IMR-90 (cell line): ENCODE measurements at regions of chr12 and their contacts with region 1.

Region 1: DNA sequence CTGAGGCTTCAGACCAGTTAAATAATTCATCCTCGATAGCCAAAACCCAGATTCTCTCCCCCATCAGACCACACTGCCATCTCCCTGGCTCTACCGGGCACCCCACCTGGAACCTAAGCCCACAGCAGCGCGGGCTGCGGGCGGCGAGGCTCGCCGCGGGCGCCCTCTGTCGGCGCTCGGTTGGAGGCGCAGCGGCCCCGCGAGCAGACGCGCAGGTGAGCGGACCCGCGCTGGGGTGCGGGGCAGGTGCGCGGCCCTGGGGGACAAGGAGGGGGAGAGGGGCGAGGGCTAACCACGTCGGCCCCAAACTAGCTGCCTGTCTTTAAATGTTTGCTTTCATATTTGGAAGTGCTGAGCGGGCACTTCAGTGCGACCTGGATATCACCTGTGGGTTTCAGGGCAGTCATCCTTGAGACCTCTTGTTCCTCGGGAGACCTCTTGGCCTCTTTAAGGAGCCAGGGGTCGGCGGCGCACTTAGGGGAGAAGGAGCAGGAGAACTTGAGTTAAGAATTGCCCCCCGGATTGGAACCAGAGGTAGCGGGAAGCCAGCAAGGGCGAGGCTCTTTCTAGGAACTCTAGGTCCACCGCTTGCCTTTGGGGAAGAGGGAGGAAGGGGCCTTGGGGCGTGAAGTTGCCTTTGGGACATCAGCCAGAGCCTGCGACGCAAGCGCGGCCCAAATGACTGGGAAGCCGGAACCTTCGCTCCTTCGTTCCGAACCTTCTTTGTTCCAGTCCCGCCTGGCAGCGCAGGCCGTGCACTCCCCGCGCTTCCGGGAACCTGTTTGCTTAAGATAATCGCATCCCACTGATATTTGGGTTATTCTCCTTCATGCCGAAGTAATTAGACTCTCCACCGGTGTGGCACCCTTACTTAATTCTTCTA is 78.7 kb downstream of the NEDD1 start:
- DNase-seq: no peak
- ATAC-seq: peak; percentile 75
- H3K4me3 ChIP-seq: peak overlapping the region; percentile 10
- H3K27ac ChIP-seq: no peak overlapping the region
- H3K4me1 ChIP-seq: no peaks in the 10 kb centered on the region
- H3K27me3 ChIP-seq: peaks cover 10% of the 10 kb centered on the region
- CTCF ChIP-seq: peak; percentile 64
- POLR2A ChIP-seq: no peak
- RAD21 ChIP-seq: peak; percentile 63

Region 2: GRCh38 chr12:96578526-96579125 is 407.1 kb before region 1 on chr12:
- CTCF ChIA-PET with region 1: interaction called, 7 read pairs
- POLR2A ChIA-PET with region 1: no interaction called
- dilution Hi-C with region 1: no loop called
- in situ Hi-C with region 1: loop called (anchors 10 kb)
- intact Hi-C with region 1: loop called (anchors 1 kb)
- DNase-seq: peak; percentile 64
- ATAC-seq: peak; percentile 88
- H3K4me3 ChIP-seq: no peak overlapping the region
- H3K27ac ChIP-seq: no peak overlapping the region
- H3K4me1 ChIP-seq: no peaks in the 10 kb centered on the region
- H3K27me3 ChIP-seq: no peaks in the 10 kb centered on the region
- CTCF ChIP-seq: peak; percentile 80
- POLR2A ChIP-seq: no peak
- RAD21 ChIP-seq: peak; percentile 85

Region 3: GRCh38 chr12:96587691-96588090 is 398.0 kb before region 1 on chr12:
- CTCF ChIA-PET with region 1: no interaction called
- POLR2A ChIA-PET with region 1: no interaction called
- dilution Hi-C with region 1: no loop called
- in situ Hi-C with region 1: loop called (anchors 10 kb)
- intact Hi-C with region 1: no loop called
- DNase-seq: peak; percentile 22
- ATAC-seq: no peak
- H3K4me3 ChIP-seq: no peak overlapping the region
- H3K27ac ChIP-seq: no peak overlapping the region
- H3K4me1 ChIP-seq: no peaks in the 10 kb centered on the region
- H3K27me3 ChIP-seq: no peaks in the 10 kb centered on the region
- CTCF ChIP-seq: no peak
- POLR2A ChIP-seq: no peak
- RAD21 ChIP-seq: no peak

Region 4: DNA sequence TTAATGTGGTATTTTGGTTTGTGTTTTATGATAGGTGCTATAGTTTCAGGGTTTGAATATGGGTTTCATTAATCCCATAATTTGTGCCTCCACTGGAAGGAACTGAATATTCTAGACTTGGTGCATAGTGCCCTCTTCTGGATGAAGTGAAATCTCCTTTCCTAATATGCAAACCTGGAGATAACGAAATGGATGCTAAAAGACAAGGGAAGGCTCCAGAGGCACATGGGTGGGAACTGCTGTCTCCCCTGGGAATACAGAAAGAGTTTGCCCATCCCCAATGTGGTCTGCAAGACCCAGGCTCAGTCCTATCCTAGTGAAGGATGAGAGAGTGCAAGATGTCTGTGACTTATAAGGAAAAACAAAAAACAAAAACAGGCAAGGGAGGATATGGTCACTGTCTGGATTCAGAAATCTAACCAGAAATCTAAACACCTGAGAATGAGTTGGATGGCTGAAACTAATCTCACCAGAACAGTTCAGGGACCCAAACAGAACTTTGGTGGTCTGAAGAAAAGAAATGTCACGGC is 1387.4 kb after region 1 on chr12:
- CTCF ChIA-PET with region 1: no interaction called
- POLR2A ChIA-PET with region 1: no interaction called
- dilution Hi-C with region 1: no loop called
- in situ Hi-C with region 1: loop called (anchors 25 kb)
- intact Hi-C with region 1: loop called (anchors 1 kb)
- DNase-seq: peak; percentile 51
- ATAC-seq: peak; percentile 64; the same call in 1 of the 2 replicates
- H3K4me3 ChIP-seq: no peak overlapping the region
- H3K27ac ChIP-seq: no peak overlapping the region
- H3K4me1 ChIP-seq: no peaks in the 10 kb centered on the region
- H3K27me3 ChIP-seq: peaks cover 4% of the 10 kb centered on the region
- CTCF ChIP-seq: peak; percentile 75
- POLR2A ChIP-seq: no peak
- RAD21 ChIP-seq: peak; percentile 84

Region 5: DNA sequence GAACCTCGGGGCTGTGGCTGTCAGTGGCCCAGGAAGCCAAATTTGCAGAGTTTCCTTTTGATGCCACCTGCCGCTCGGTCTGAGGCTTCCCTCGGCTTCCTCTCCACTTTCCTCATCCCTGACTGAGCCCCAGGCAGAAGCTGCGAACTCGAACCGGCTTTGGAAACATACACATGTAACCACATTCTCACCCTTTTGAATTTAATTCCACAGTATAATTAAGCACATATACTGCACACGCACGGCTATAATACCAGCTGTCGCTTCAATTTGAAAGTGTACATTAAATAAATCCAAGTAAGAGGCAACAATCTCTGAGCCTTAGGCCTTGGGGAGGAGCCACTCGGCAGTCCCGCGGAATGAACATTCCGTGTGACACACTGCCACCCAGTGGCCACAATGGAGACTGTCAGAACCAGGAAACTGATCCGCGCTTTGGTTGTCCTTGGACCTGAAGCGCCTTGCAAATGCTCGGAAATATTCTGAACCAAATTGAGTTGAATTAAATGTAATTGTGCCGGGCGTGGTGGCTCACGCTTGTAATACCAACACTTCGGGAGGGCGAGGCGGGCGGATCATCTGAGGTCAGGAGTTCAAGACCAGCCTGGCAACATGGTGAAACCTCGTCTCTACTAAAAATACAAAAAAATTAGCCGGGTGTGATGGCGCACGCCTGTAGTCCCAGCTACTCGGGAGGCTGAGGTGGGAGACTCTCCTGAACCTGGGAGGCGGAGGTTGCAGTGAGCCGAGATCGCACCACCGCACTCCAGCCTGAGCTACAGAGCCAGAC is 1411.8 kb after region 1 on chr12:
- CTCF ChIA-PET with region 1: interaction called, 4 read pairs
- POLR2A ChIA-PET with region 1: no interaction called
- dilution Hi-C with region 1: no loop called
- in situ Hi-C with region 1: loop called (anchors 25 kb)
- intact Hi-C with region 1: loop called (anchors 1 kb)
- DNase-seq: peak; percentile 71
- ATAC-seq: peak; percentile 98
- H3K4me3 ChIP-seq: peak overlapping the region; percentile 32
- H3K27ac ChIP-seq: no peak overlapping the region
- H3K4me1 ChIP-seq: peaks cover 4% of the 10 kb centered on the region; the same call in 1 of the 2 replicates
- H3K27me3 ChIP-seq: no peaks in the 10 kb centered on the region
- CTCF ChIP-seq: peak; percentile 87
- POLR2A ChIP-seq: no peak; the same call in 1 of the 2 replicates
- RAD21 ChIP-seq: peak; percentile 88